ENCODE measurements at regions of chr18 and their contacts with region 1.

Region 1: DNA sequence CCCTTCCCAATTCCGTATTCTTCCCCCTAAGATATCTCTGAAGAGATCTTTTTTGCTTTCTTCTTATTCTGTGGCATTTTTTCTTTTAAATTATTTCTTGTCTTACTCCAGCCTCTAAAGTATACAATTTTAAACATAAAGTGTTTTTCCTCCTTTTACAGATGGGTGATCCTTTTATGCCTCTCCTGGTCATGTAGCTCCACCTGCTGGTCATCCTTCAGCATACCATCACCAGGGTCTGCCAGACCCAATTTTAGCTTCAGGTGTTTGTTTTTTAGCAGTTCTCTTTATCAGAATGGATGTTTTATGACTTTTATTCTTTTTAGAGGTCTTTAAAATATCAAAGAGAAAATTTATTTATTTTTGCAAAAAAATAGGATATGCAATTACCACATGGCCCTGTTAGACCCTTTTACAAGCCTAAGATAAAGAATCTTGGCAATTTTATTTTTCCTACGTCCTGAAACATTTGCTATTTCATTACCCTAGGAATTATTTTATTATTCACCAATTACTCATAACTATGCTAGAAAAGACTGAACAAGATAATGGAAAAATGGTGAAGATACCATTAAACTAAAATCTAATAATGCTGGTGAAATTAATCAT is 55.5 kb downstream of the PIGN start:
- DNase-seq: peak; percentile 11 to 66
- ATAC-seq: peak in 6 of 8 donors; percentile 46 to 79 (median 58)
- H3K4me3 ChIP-seq: no peak overlapping the region
- H3K27ac ChIP-seq: no peak overlapping the region
- H3K4me1 ChIP-seq: no peaks in the 10 kb centered on the region
- H3K27me3 ChIP-seq: no peaks in the 10 kb centered on the region
- CTCF ChIP-seq: peak; percentile 89 to 98 (median 94)

Region 2: GRCh38 chr18:60809937-60810336 is 1321.5 kb before region 1 on chr18:
- intact Hi-C with region 1: loop called in 1 of 10 experiments (anchors 10 kb)
- DNase-seq: no peak
- ATAC-seq: no peak
- H3K4me3 ChIP-seq: no peak overlapping the region
- H3K27ac ChIP-seq: no peak overlapping the region
- H3K4me1 ChIP-seq: no peaks in the 10 kb centered on the region
- H3K27me3 ChIP-seq: no peaks in the 10 kb centered on the region
- CTCF ChIP-seq: no peak

Region 3: DNA sequence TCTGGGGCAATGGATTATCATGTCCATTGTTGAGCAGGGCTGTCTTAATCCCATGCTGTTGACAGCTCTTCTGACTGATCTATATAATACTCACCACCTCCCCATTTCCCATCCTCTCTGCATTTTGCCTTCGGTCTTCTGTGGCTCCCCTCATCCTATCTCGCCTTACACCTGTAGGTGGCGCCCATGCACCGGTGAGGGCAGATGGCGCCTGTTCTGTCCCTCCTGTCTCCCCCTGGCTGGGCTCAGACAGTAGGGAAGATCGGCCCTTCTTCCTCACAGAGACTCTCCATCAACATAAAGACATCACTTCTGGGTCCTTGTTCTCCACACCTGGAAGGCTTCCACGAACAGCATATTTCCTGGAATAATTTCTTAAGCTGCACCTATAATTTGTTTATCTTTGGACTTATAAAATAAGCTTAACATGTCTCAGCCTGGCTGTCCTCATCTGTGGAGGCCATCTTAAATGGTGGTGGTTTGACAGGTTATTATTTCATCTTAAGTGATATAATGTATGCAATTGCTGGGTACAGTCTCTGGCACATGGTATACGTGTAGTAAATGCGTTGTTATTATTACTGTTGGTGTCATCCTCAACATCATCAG is 809.0 kb before region 1 on chr18:
- intact Hi-C with region 1: loop called in 5 of 10 experiments (anchors 5 to 10 kb)
- DNase-seq: peak; percentile 41 to 58
- ATAC-seq: peak in 6 of 8 donors; percentile 62 to 90 (median 72)
- H3K4me3 ChIP-seq: no peak overlapping the region
- H3K27ac ChIP-seq: no peak overlapping the region
- H3K4me1 ChIP-seq: no peaks in the 10 kb centered on the region
- H3K27me3 ChIP-seq: peaks cover 0 to 4% (median 0%) of the 10 kb centered on the region in 7 donors
- CTCF ChIP-seq: peak; percentile 29 to 77 (median 72)

Region 4: GRCh38 chr18:61551586-61551985 is 579.8 kb before region 1 on chr18:
- intact Hi-C with region 1: loop called in 9 of 10 experiments (anchors 1 to 10 kb)
- DNase-seq: peak in 1 of 2 donors; percentile 77
- ATAC-seq: peak; percentile 65 to 92 (median 74)
- H3K4me3 ChIP-seq: no peak overlapping the region
- H3K27ac ChIP-seq: peak overlapping the region in 3 of 10 donors; percentile 16 to 36 (median 17)
- H3K4me1 ChIP-seq: peaks cover 0 to 11% (median 4%) of the 10 kb centered on the region in 9 donors
- H3K27me3 ChIP-seq: no peaks in the 10 kb centered on the region
- CTCF ChIP-seq: peak; percentile 73 to 90 (median 88)

Region 5: DNA sequence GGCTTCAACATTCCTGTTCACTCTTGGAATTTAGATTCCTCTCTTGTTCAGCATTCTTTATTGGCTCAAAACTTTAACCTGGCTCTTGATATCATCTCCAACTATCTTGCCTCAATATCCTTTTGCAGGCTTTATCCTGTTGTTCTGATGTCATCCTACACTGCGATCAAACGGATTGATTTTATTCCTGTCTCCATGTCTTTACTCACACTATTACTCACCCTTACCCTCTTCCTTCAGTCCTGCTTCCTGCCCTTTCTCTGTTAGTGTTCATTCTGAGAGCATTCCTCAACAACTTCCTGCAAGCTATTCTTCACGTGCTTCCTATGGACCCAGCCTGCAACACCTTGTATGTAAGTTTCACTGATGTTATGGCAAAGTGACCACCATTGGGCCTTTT is 503.3 kb before region 1 on chr18:
- intact Hi-C with region 1: loop called in 1 of 10 experiments (anchors 5 kb)
- DNase-seq: no peak
- ATAC-seq: no peak
- H3K4me3 ChIP-seq: no peak overlapping the region
- H3K27ac ChIP-seq: no peak overlapping the region
- H3K4me1 ChIP-seq: no peaks in the 10 kb centered on the region
- H3K27me3 ChIP-seq: no peaks in the 10 kb centered on the region
- CTCF ChIP-seq: no peak

Region 6: GRCh38 chr18:61743775-61744531 is 387.5 kb before region 1 on chr18:
- intact Hi-C with region 1: loop called in 1 of 10 experiments (anchors 10 kb)
- DNase-seq: peak; percentile 32 to 76
- ATAC-seq: peak; percentile 63 to 82 (median 70)
- H3K4me3 ChIP-seq: no peak overlapping the region
- H3K27ac ChIP-seq: peak overlapping the region; percentile 60 to 92 (median 81)
- H3K4me1 ChIP-seq: peaks cover 6 to 74% (median 39%) of the 10 kb centered on the region in 9 donors
- H3K27me3 ChIP-seq: no peaks in the 10 kb centered on the region
- CTCF ChIP-seq: no peak

Region 7: GRCh38 chr18:61901323-61901986 is 229.9 kb before region 1 on chr18:
- intact Hi-C with region 1: loop called in 8 of 10 experiments (anchors 5 to 10 kb)
- DNase-seq: no peak
- ATAC-seq: peak; percentile 50 to 79 (median 71)
- H3K4me3 ChIP-seq: no peak overlapping the region
- H3K27ac ChIP-seq: no peak overlapping the region
- H3K4me1 ChIP-seq: peaks cover 0 to 6% (median under 1%) of the 10 kb centered on the region in 9 donors
- H3K27me3 ChIP-seq: peaks cover 0 to 15% (median 0%) of the 10 kb centered on the region in 7 donors
- CTCF ChIP-seq: peak; percentile 79 to 96 (median 92)

Region 8: GRCh38 chr18:62088156-62088555 is 43.2 kb before region 1 on chr18:
- intact Hi-C with region 1: no loop called
- DNase-seq: no peak
- ATAC-seq: no peak
- H3K4me3 ChIP-seq: no peak overlapping the region
- H3K27ac ChIP-seq: no peak overlapping the region
- H3K4me1 ChIP-seq: peaks cover 0 to 24% (median 0%) of the 10 kb centered on the region in 9 donors
- H3K27me3 ChIP-seq: no peaks in the 10 kb centered on the region
- CTCF ChIP-seq: no peak

Region 9: GRCh38 chr18:62152844-62153243 is 21.4 kb after region 1 on chr18:
- intact Hi-C with region 1: no loop called
- DNase-seq: no peak
- ATAC-seq: no peak
- H3K4me3 ChIP-seq: no peak overlapping the region
- H3K27ac ChIP-seq: no peak overlapping the region
- H3K4me1 ChIP-seq: no peaks in the 10 kb centered on the region
- H3K27me3 ChIP-seq: no peaks in the 10 kb centered on the region
- CTCF ChIP-seq: no peak

Region 10: DNA sequence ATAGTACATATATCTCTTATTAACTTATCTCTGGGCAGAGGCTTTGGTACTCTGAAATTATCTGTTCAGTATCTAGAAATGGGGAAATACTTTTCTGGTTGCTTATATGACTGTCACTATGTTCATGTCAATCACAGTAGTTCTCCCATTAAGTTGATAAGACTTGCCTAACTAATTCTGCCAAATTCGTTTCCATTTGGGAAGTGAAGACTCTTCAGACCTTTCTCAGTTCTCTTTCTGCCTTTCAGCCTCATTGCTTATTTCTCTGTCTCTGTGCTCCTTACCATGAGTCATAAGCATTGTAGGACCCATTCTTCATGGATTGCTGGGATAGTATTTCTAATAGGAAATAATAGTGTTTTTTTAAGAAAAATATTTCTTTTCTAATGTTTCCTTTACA is 697.4 kb after region 1 on chr18:
- intact Hi-C with region 1: no loop called
- DNase-seq: no peak
- ATAC-seq: no peak
- H3K4me3 ChIP-seq: no peak overlapping the region
- H3K27ac ChIP-seq: no peak overlapping the region
- H3K4me1 ChIP-seq: peaks cover 0 to 34% (median 21%) of the 10 kb centered on the region in 9 donors
- H3K27me3 ChIP-seq: no peaks in the 10 kb centered on the region
- CTCF ChIP-seq: no peak